CD4-positive, alpha-beta T cell (primary cell): ENCODE measurements at regions of chr19 and their contacts with region 1.

Region 1: GRCh38 chr19:57914531-57914930 is 1.9 kb downstream of the ZNF417 start:
- DNase-seq: no peak
- ATAC-seq: no peak
- H3K4me3 ChIP-seq: no peak overlapping the region
- H3K4me3 Mint-ChIP-seq: peak overlapping the region; percentile 93
- H3K27ac ChIP-seq: no peak overlapping the region
- H3K27ac Mint-ChIP-seq: peak overlapping the region; percentile 92
- H3K4me1 ChIP-seq: peaks cover 14% of the 10 kb centered on the region
- H3K4me1 Mint-ChIP-seq: peaks cover 39% of the 10 kb centered on the region
- H3K27me3 ChIP-seq: no peaks in the 10 kb centered on the region
- H3K27me3 Mint-ChIP-seq: no peaks in the 10 kb centered on the region
- CTCF ChIP-seq: no peak

Region 2: DNA sequence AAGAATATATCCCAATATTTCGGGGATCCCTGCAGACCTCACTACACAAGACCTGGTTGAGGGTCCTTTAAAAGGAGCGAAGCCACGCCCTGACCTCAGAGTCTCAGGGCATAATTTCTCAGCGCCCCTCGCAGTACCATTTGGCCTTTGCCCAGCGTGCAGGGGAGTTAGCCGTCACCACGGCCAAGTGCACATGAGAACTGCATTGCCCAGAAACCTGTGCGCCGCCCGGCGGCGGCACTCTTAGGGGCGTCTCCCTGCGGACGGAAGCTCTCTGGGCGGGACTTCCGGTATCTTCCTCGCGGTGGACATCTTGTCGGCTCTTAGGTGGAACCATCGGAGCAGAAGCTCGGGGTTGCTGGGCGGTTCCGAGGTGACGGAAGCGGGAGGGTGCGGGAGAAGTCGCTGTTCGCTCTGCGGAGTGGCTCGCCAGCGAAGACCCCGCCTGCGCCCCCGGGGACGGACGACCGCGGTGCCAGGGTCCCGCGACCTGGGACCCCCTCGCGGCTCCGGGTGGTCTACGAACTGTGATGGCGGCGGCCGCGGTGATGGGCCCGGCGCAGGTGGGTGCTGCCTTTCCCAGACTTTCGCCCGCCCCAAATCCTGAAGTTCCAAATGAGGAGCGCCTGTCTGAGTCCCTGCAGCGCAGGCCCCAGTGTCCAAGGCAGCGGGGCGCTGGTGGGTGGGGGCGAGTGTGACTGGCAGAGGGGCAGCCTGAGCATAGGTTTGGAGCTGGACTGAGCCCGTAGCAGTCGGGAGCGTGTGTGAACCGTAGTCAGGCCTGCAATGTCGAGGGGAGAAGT is 300.4 kb before region 1 on chr19 and contains the start of gene ZNF134:
- CTCF ChIA-PET with region 1: no interaction called
- POLR2A ChIA-PET with region 1: interaction called, 4 read pairs
- intact Hi-C with region 1: loop called in 1 of 2 experiments (anchors 5 kb)
- DNase-seq: peak; percentile 82 to 96 (median 88)
- ATAC-seq: peak; percentile 99
- H3K4me3 ChIP-seq: peak within 1 kb of the TSS; percentile 94
- H3K4me3 Mint-ChIP-seq: peak within 1 kb of the TSS; percentile 95
- H3K27ac ChIP-seq: peak within 1 kb of the TSS; percentile 26 to 50
- H3K27ac Mint-ChIP-seq: peak within 1 kb of the TSS; percentile 82
- H3K4me1 ChIP-seq: peaks cover 26% of the 10 kb centered on the region
- H3K4me1 Mint-ChIP-seq: peaks cover 36% of the 10 kb centered on the region
- H3K27me3 ChIP-seq: no peaks in the 10 kb centered on the region
- H3K27me3 Mint-ChIP-seq: no peaks in the 10 kb centered on the region
- CTCF ChIP-seq: peak; percentile 25
- total RNA-seq, gene ZNF134: 24.6 to 25.7 TPM

Region 3: GRCh38 chr19:57934820-57935665 is 20.5 kb after region 1 on chr19 and contains the start of gene ZNF418:
- CTCF ChIA-PET with region 1: no interaction called
- POLR2A ChIA-PET with region 1: interaction called, 14 read pairs
- intact Hi-C with region 1: no loop called
- DNase-seq: peak in 11 of 14 experiments; percentile 5 to 76 (median 28)
- ATAC-seq: peak; percentile 99
- H3K4me3 ChIP-seq: peak within 1 kb of the TSS; percentile 58
- H3K4me3 Mint-ChIP-seq: peak within 1 kb of the TSS; percentile 94
- H3K27ac ChIP-seq: peak within 1 kb of the TSS in 1 of 2 donors; percentile 50
- H3K27ac Mint-ChIP-seq: peak within 1 kb of the TSS; percentile 90
- H3K4me1 ChIP-seq: peaks cover 12% of the 10 kb centered on the region
- H3K4me1 Mint-ChIP-seq: peaks cover 11% of the 10 kb centered on the region
- H3K27me3 ChIP-seq: peaks cover 0 to 2% of the 10 kb centered on the region in 2 experiments
- H3K27me3 Mint-ChIP-seq: no peaks in the 10 kb centered on the region
- CTCF ChIP-seq: no peak
- total RNA-seq, gene ZNF418: 3.5 to 4.4 TPM